Activated CD4-positive, alpha-beta T cell treated with anti-CD3 and anti-CD28 coated beads for 36 hours (primary cell): ENCODE measurements at regions of chr2 and their contacts with region 1.

Region 1: GRCh38 chr2:235135990-235136561 is 184.3 kb downstream of the SH3BP4 start:
- DNase-seq: peak; percentile 75
- ATAC-seq: no peak
- H3K4me3 Mint-ChIP-seq: no peak overlapping the region
- H3K27ac Mint-ChIP-seq: no peak overlapping the region
- H3K4me1 Mint-ChIP-seq: peaks cover 2% of the 10 kb centered on the region
- H3K27me3 Mint-ChIP-seq: peaks cover 18% of the 10 kb centered on the region

Region 2: GRCh38 chr2:234848578-234848977 is 287.5 kb before region 1 on chr2:
- CTCF ChIA-PET with region 1: no interaction called
- POLR2A ChIA-PET with region 1: no interaction called
- intact Hi-C with region 1: no loop called
- DNase-seq: no peak
- ATAC-seq: no peak
- H3K4me3 Mint-ChIP-seq: no peak overlapping the region
- H3K27ac Mint-ChIP-seq: no peak overlapping the region
- H3K4me1 Mint-ChIP-seq: no peaks in the 10 kb centered on the region
- H3K27me3 Mint-ChIP-seq: peaks cover 9% of the 10 kb centered on the region

Region 3: GRCh38 chr2:235180642-235181041 is 44.6 kb after region 1 on chr2:
- CTCF ChIA-PET with region 1: no interaction called
- POLR2A ChIA-PET with region 1: no interaction called
- intact Hi-C with region 1: no loop called
- DNase-seq: no peak
- ATAC-seq: no peak
- H3K4me3 Mint-ChIP-seq: no peak overlapping the region
- H3K27ac Mint-ChIP-seq: no peak overlapping the region
- H3K4me1 Mint-ChIP-seq: no peaks in the 10 kb centered on the region
- H3K27me3 Mint-ChIP-seq: peaks cover 33% of the 10 kb centered on the region

Region 4: DNA sequence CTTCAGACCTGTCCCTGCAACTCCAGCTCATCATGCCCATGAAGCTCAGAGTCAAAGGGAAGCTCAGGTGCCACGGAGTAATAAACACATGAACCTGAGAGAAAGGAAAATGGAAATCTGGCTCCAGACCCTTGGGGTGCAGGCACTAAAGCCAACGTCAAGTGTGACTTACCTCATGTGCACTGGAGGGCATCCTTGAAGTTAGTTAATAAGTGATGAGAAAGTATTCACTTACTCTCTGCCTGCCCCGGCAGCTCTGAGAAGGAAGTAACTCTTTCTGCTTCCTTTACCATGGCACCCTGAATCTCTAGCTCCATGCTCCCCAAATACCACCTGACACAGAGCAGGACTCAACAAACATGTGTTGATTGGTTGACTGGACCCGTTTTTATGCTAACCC is 336.4 kb after region 1 on chr2:
- CTCF ChIA-PET with region 1: no interaction called
- POLR2A ChIA-PET with region 1: no interaction called
- intact Hi-C with region 1: no loop called
- DNase-seq: no peak
- ATAC-seq: no peak
- H3K4me3 Mint-ChIP-seq: no peak overlapping the region
- H3K27ac Mint-ChIP-seq: no peak overlapping the region
- H3K4me1 Mint-ChIP-seq: no peaks in the 10 kb centered on the region
- H3K27me3 Mint-ChIP-seq: peaks cover 8% of the 10 kb centered on the region

Region 5: DNA sequence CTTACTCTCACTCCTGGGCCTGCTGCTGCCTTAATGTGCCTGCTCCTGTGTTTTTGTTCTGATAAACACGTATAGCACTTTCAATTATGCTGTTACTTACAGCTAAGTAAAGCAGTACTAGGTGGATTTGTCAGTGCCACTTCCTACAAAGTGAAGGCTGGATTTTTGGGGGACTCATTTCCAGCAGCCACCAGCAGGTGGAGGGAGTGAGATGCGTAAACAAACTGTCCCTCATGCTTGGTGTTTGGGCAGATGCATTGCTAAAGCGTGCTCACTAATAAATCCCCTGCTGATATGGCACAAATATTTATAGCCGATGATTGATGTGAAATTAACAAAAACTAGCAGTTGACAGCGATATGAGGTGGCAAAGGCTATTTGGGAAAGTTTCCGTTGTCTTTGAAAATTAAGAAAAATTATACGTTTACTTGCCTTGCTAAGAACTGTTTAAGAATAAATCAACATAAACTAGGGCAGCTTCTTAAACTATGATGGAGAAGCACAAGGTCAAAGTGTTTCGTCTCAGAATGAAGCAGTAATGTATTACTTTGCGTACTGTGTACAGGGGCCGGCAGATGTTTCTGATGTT is 459.4 kb after region 1 on chr2:
- CTCF ChIA-PET with region 1: interaction called, 14 read pairs
- POLR2A ChIA-PET with region 1: no interaction called
- intact Hi-C with region 1: loop called (anchors 1 kb)
- DNase-seq: peak; percentile 61
- ATAC-seq: no peak
- H3K4me3 Mint-ChIP-seq: no peak overlapping the region
- H3K27ac Mint-ChIP-seq: no peak overlapping the region
- H3K4me1 Mint-ChIP-seq: no peaks in the 10 kb centered on the region
- H3K27me3 Mint-ChIP-seq: peaks cover 4% of the 10 kb centered on the region